ENCODE measurements at regions of chr9 and their contacts with region 1.

Region 1: DNA sequence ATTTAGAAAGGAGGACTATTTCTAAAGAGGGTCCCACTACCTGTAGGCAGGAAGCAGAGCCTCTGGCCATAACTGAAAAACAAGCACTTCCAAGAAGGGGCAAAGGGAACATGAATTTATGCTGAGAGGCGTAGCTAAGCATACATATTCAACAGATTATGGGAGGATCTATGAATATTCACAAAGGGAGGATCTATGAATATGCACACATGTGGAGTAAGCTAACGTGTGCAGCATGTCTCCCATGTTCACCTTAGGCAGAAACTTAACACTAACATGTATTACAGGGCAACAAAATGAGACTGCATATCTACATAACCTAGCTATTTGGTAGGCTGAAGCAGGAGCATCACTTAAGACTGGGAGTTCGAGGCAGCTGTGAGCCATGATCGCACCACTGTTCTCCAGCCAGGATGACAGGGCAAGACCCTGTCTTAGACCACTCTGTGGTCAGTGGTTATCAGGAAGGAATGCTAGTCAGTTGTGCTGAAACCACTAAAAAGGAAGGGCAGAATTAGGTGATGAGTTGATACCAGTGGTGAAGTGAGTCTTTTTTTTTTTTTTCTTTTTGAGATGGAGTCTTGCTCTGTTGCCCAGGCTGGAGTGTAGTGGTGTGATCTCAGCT is 20.8 kb downstream of the FXN start:
- DNase-seq: no peak
- ATAC-seq: no peak
- H3K4me3 ChIP-seq: no peak overlapping the region
- H3K27ac ChIP-seq: no peak overlapping the region
- H3K4me1 ChIP-seq: no peaks in the 10 kb centered on the region
- H3K27me3 ChIP-seq: no peaks in the 10 kb centered on the region
- CTCF ChIP-seq: no peak

Region 2: GRCh38 chr9:69104830-69105527 is 48.7 kb after region 1 on chr9:
- CTCF ChIA-PET with region 1: no interaction called
- POLR2A ChIA-PET with region 1: interaction called, 3 read pairs
- intact Hi-C with region 1: loop called (anchors 5 kb)
- DNase-seq: peak; percentile 73
- ATAC-seq: peak; percentile 79
- H3K4me3 ChIP-seq: no peak overlapping the region; the same call in 1 of the 2 replicates
- H3K27ac ChIP-seq: peak overlapping the region; percentile 48
- H3K4me1 ChIP-seq: peaks cover 29% of the 10 kb centered on the region
- H3K27me3 ChIP-seq: no peaks in the 10 kb centered on the region
- CTCF ChIP-seq: no peak

Region 3: DNA sequence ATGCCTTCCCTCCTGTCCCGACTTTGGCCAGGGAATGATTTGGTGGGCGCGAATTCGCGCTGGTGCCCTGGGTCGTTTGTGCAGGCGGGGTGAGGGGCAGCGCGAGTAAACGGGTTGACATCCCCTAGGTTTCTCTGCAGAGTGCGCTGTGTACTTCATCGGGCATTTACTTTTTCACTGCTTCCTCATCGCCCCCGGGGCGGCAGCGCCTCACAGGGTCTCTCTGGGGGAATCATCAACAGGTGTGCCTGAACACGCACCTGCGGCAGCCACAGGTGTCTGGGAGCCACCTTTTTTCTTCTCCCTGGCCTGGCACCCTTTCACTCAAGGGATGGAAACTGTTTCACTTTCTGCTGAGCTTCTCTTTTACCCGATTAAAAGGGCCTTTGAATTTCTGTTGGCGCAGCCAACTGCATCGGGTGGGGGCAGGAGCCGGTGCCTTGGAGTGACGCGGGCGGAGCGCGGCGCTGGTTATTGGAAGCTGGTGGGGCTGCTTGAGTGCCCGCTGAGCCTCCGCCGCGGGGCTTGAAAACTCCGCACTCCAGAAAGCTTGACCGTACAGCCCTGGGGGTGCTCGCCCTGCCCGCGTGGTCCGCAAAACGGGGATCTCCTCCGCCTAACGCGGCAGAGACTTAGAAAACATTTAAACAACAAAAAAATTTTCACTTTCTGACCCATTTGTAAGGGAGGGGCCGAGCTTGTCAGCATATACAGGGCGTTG is 65.7 kb after region 1 on chr9:
- CTCF ChIA-PET with region 1: no interaction called
- POLR2A ChIA-PET with region 1: no interaction called
- intact Hi-C with region 1: loop called (anchors 5 kb)
- DNase-seq: peak; percentile 48
- ATAC-seq: peak; percentile 38
- H3K4me3 ChIP-seq: peak overlapping the region; percentile 79
- H3K27ac ChIP-seq: peak overlapping the region; percentile 99
- H3K4me1 ChIP-seq: peaks cover 14% of the 10 kb centered on the region
- H3K27me3 ChIP-seq: no peaks in the 10 kb centered on the region
- CTCF ChIP-seq: no peak

Region 4: DNA sequence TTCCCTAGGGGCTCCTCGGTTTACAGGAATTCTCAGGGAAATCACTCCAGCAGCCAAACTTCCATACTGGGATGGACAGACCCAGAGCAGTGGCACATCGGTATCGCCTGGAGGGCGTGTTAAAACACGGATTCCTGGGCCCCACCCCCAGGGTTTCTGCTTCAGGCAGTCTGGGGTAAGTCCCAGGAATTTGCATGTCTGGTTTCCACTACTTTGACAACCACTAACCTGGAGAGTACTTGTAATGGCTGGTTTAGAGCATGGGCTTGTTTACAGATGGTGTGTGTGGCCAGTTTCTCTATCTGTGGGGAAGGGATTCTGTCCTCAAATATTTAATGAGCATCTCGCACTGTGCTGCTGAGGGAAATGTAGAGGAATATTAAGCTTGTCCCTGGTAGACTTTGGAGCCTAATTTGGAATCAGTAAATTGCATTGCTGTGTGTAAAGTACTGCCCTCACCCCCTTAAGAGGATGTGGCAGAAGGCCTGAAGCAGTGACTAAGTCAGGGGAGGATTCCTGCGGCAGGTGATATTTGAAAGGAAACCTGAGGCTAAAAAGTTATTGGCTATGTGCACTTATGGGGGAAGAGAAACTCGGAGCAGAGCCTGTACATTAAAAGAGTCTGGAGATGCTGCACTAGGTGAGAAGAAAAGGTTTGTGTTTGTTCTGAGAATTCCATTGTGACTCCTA is 99.2 kb after region 1 on chr9:
- CTCF ChIA-PET with region 1: interaction called, 12 read pairs
- POLR2A ChIA-PET with region 1: no interaction called
- intact Hi-C with region 1: no loop called
- DNase-seq: peak; percentile 78
- ATAC-seq: peak; percentile 86
- H3K4me3 ChIP-seq: peak overlapping the region; percentile 7; the same call in 1 of the 2 replicates
- H3K27ac ChIP-seq: peak overlapping the region; percentile 36
- H3K4me1 ChIP-seq: peaks cover 16% of the 10 kb centered on the region
- H3K27me3 ChIP-seq: no peaks in the 10 kb centered on the region
- CTCF ChIP-seq: no peak

Region 5: DNA sequence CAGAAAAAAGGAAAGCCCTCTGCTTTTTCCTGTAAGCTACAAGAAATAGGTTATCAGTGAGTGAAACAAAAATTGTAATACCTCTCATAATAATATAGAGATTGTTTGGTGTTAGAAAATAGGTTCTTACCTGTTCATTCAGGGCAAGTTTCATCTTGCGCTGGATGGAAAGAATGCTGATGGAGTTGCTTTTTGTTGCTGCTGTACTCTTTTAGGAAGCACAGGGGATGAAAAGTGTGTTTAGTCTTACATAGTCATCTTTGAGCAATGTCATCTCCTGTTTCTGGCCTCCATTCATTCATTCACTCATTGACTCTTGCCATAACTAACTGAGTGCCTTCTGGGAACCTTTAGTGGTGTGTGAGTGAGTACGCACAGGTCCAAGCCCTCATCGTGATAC is 275.1 kb after region 1 on chr9:
- CTCF ChIA-PET with region 1: no interaction called
- POLR2A ChIA-PET with region 1: no interaction called
- intact Hi-C with region 1: no loop called
- DNase-seq: no peak
- ATAC-seq: no peak
- H3K4me3 ChIP-seq: no peak overlapping the region
- H3K27ac ChIP-seq: no peak overlapping the region
- H3K4me1 ChIP-seq: no peaks in the 10 kb centered on the region
- H3K27me3 ChIP-seq: peaks cover 8% of the 10 kb centered on the region; the same call in 1 of the 2 replicates
- CTCF ChIP-seq: no peak

Measured in PC-3 (cell line).